Activated CD4-positive, alpha-beta T cell treated with anti-CD3 and anti-CD28 coated beads, Interleukin-2, amount 10 ng/mL, durations not matched to agents 7 days and 5 days (primary cell): ENCODE measurements at regions of chr17 and their contacts with region 1.

Region 1: DNA sequence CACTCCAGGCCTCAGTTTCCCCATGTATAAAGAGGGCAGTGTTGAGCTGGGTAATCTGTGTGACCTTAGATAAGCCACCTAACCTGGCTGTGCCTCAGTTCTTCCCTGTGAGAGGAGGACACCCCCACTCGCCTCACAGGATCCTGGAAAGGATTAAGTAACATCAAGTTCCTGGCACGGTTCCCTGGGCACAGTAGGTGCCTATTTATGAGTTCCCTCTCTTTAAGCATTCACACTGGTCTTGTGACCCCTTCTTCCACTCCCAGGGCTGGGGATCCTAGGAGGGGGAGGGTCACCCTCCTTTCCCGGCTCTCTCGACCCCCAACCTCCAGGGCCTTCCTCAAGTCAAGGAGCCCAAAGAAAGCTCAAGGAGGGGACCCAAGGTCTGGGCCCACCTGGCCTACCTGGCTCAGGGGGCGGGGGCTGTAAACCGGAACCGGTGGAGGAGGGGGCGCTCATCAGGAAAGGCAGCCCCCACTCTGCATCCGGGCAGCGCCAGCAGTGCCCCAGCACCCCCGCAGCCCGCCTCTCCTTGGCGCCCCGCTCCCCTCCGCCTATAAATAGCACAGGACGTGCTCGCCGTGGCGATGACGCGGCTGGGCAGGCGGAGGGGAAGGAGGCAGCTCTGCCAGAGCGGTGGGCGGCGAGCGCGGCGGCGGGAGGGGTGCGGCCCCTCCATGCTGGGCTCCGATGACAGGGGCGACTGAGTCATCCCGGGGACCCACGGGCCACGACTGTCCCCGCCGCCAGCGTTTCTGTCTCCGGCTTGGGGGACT is 9.4 kb downstream of the RPL19 start:
- DNase-seq: peak; percentile 62
- H3K4me3 Mint-ChIP-seq: no peak overlapping the region
- H3K27ac Mint-ChIP-seq: no peak overlapping the region
- H3K4me1 Mint-ChIP-seq: peaks cover 27% of the 10 kb centered on the region
- H3K27me3 Mint-ChIP-seq: peaks cover 9% of the 10 kb centered on the region

Region 2: GRCh38 chr17:39244600-39245570 is 35.4 kb after region 1 on chr17:
- CTCF ChIA-PET with region 1: interaction called, 14 read pairs
- POLR2A ChIA-PET with region 1: no interaction called
- DNase-seq: peak; percentile 88
- H3K4me3 Mint-ChIP-seq: no peak overlapping the region
- H3K27ac Mint-ChIP-seq: no peak overlapping the region
- H3K4me1 Mint-ChIP-seq: peaks cover 10% of the 10 kb centered on the region
- H3K27me3 Mint-ChIP-seq: no peaks in the 10 kb centered on the region